T-cell (primary cell): ENCODE measurements at regions of chr2 and their contacts with region 1.

Region 1: DNA sequence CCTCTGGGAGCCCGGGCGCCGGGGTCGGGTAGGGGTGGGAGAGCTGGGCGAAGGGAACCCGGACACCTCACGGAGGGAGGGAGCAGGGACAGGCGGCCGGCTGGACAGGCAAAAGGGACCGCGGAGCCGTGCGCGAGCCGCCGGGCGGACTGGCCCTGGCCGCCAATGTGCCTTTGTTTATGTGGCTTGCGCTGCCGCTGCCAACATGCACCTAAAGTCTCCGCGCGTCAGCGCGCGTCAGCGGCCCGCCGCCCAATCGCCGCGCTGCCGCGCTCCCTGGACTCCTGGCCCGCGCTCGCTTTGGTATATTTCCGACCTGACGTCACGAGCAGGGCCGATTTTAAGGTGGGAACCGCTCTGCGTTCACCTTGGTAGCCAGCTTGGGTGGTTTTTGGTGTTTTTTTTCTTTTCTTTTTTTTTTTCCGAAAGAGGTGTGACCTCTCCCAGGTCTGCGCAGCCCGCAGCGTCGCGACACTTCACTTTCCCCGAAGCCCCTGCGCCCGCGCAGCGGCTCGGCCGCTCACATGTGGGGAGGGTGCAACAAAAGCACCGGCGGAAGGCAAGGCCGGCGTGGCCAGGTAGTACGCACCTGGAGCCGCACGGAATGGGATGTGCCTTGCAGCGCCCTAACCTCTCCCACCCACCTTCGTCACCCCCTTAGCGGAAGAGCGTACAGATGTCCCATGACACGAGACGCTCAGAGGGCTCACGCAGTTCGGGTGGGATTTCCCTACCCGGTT is at the start of gene NR4A2:
- DNase-seq: peak; percentile 67 to 97 (median 91)
- ATAC-seq: peak; percentile 71 to 73 (median 73)
- H3K4me3 ChIP-seq: peak within 1 kb of the TSS; percentile 81 to 96
- H3K4me3 Mint-ChIP-seq: peak within 1 kb of the TSS; percentile 92 to 96 (median 95)
- H3K27ac ChIP-seq: peak within 1 kb of the TSS; percentile 99
- H3K27ac Mint-ChIP-seq: peak within 1 kb of the TSS; percentile 94 to 95
- H3K4me1 ChIP-seq: peaks cover 17 to 40% of the 10 kb centered on the region in 2 experiments
- H3K4me1 Mint-ChIP-seq: peaks cover 43 to 52% (median 52%) of the 10 kb centered on the region in 3 donors
- H3K27me3 ChIP-seq: peaks cover 8 to 19% of the 10 kb centered on the region in 2 experiments
- H3K27me3 Mint-ChIP-seq: peaks cover 16 to 21% of the 10 kb centered on the region in 2 donors
- total RNA-seq, gene NR4A2: 3.7 to 300 (median 6.7) TPM

Region 2: DNA sequence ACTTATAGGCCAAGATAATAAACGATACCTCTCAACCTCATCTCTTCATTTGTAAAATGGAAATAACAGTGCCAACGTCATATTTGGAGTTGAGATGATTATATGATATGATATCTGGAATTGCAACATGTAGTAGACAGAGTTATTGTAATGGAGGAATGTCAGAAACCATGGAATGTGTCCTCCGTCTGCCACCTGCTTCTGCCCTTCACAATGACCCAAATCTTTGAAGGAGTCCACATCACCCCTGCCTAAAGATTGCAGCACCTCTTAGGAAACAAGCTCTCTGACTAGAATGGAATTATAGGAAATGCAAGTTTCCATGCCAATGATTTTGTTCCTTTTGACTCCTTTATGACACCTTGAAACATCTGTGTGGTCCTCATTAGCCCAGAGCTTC is 15.1 kb before region 1 on chr2:
- CTCF ChIA-PET with region 1: interaction called, 3 to 10 read pairs
- POLR2A ChIA-PET with region 1: interaction called in 1 of 2 experiments, 3 read pairs
- DNase-seq: no peak
- ATAC-seq: no peak
- H3K4me3 ChIP-seq: no peak overlapping the region
- H3K4me3 Mint-ChIP-seq: no peak overlapping the region
- H3K27ac ChIP-seq: no peak overlapping the region
- H3K27ac Mint-ChIP-seq: no peak overlapping the region
- H3K4me1 ChIP-seq: peaks cover 6 to 31% of the 10 kb centered on the region in 2 experiments
- H3K4me1 Mint-ChIP-seq: peaks cover 32 to 33% (median 33%) of the 10 kb centered on the region in 3 donors
- H3K27me3 ChIP-seq: peaks cover 29 to 33% of the 10 kb centered on the region in 2 experiments
- H3K27me3 Mint-ChIP-seq: peaks cover 68 to 72% of the 10 kb centered on the region in 2 donors

Region 3: GRCh38 chr2:156394033-156394739 is 61.5 kb after region 1 on chr2:
- CTCF ChIA-PET with region 1: interaction called in 1 of 2 experiments, 44 read pairs
- POLR2A ChIA-PET with region 1: interaction called in 1 of 2 experiments, 12 read pairs
- DNase-seq: no peak
- ATAC-seq: no peak
- H3K4me3 ChIP-seq: no peak overlapping the region
- H3K4me3 Mint-ChIP-seq: no peak overlapping the region
- H3K27ac ChIP-seq: no peak overlapping the region
- H3K27ac Mint-ChIP-seq: no peak overlapping the region
- H3K4me1 ChIP-seq: peaks cover under 1 to 3% of the 10 kb centered on the region in 2 experiments
- H3K4me1 Mint-ChIP-seq: peaks cover 11 to 13% (median 13%) of the 10 kb centered on the region in 3 donors
- H3K27me3 ChIP-seq: peaks cover 0 to 2% of the 10 kb centered on the region in 2 experiments
- H3K27me3 Mint-ChIP-seq: peaks cover 0 to 2% of the 10 kb centered on the region in 2 donors

Region 4: GRCh38 chr2:156400706-156401678 is 68.3 kb after region 1 on chr2:
- CTCF ChIA-PET with region 1: interaction called, 9 to 44 read pairs
- POLR2A ChIA-PET with region 1: interaction called, 14 to 15 read pairs
- DNase-seq: peak; percentile 56 to 93 (median 75)
- ATAC-seq: peak; percentile 82 to 87 (median 84)
- H3K4me3 ChIP-seq: peak overlapping the region; percentile 93 to 94
- H3K4me3 Mint-ChIP-seq: peak overlapping the region; percentile 88 to 92 (median 89)
- H3K27ac ChIP-seq: peak overlapping the region; percentile 98
- H3K27ac Mint-ChIP-seq: peak overlapping the region; percentile 94
- H3K4me1 ChIP-seq: peaks cover 8 to 11% of the 10 kb centered on the region in 2 experiments
- H3K4me1 Mint-ChIP-seq: peaks cover 24 to 38% (median 28%) of the 10 kb centered on the region in 3 donors
- H3K27me3 ChIP-seq: no peaks in the 10 kb centered on the region
- H3K27me3 Mint-ChIP-seq: peaks cover 0 to 2% of the 10 kb centered on the region in 2 donors

Region 5: GRCh38 chr2:156589381-156590079 is 256.8 kb after region 1 on chr2:
- CTCF ChIA-PET with region 1: interaction called, 19 to 22 read pairs
- POLR2A ChIA-PET with region 1: no interaction called
- DNase-seq: peak in 19 of 35 experiments; percentile 0 to 63 (median 5)
- ATAC-seq: peak; percentile 43 to 68 (median 48)
- H3K4me3 ChIP-seq: no peak overlapping the region
- H3K4me3 Mint-ChIP-seq: no peak overlapping the region
- H3K27ac ChIP-seq: no peak overlapping the region
- H3K27ac Mint-ChIP-seq: no peak overlapping the region
- H3K4me1 ChIP-seq: no peaks in the 10 kb centered on the region
- H3K4me1 Mint-ChIP-seq: peaks cover 0 to 4% (median 2%) of the 10 kb centered on the region in 3 donors
- H3K27me3 ChIP-seq: no peaks in the 10 kb centered on the region
- H3K27me3 Mint-ChIP-seq: no peaks in the 10 kb centered on the region